Activated CD8-positive, alpha-beta T cell treated with anti-CD3 and anti-CD28 coated beads for 36 hours (primary cell): ENCODE measurements at regions of chr19 and their contacts with region 1.

Region 1: GRCh38 chr19:46021531-46022041 is 1.3 kb downstream of the PGLYRP1 start:
- DNase-seq: no peak
- ATAC-seq: no peak
- H3K4me3 Mint-ChIP-seq: no peak overlapping the region
- H3K27ac Mint-ChIP-seq: no peak overlapping the region
- H3K4me1 Mint-ChIP-seq: peaks cover 12% of the 10 kb centered on the region
- H3K27me3 Mint-ChIP-seq: peaks cover 13% of the 10 kb centered on the region
- CTCF ChIP-seq: no peak

Region 2: GRCh38 chr19:46181388-46181779 is 159.8 kb after region 1 on chr19:
- CTCF ChIA-PET with region 1: no interaction called
- POLR2A ChIA-PET with region 1: no interaction called
- intact Hi-C with region 1: loop called (anchors 10 kb)
- DNase-seq: peak; percentile 55
- ATAC-seq: peak; percentile 83
- H3K4me3 Mint-ChIP-seq: no peak overlapping the region
- H3K27ac Mint-ChIP-seq: peak overlapping the region; percentile 47
- H3K4me1 Mint-ChIP-seq: peaks cover 23% of the 10 kb centered on the region
- H3K27me3 Mint-ChIP-seq: peaks cover 40% of the 10 kb centered on the region
- CTCF ChIP-seq: no peak